OCI-LY7 (cell line): ENCODE measurements at regions of chr2 and their contacts with region 1.

Region 1: GRCh38 chr2:158006961-158007719 is 94.5 kb upstream of the UPP2 start:
- DNase-seq: no peak
- H3K4me3 ChIP-seq: no peak overlapping the region
- H3K27ac ChIP-seq: no peak overlapping the region
- H3K4me1 ChIP-seq: no peaks in the 10 kb centered on the region
- CTCF ChIP-seq: no peak; the same call in 1 of the 2 replicates

Region 2: GRCh38 chr2:157302492-157303099 is 704.5 kb before region 1 on chr2:
- CTCF ChIA-PET with region 1: no interaction called
- POLR2A ChIA-PET with region 1: interaction called, 3 read pairs
- intact Hi-C with region 1: loop called (anchors 5 kb)
- DNase-seq: peak; percentile 67
- H3K4me3 ChIP-seq: no peak overlapping the region
- H3K27ac ChIP-seq: no peak overlapping the region
- H3K4me1 ChIP-seq: no peaks in the 10 kb centered on the region
- CTCF ChIP-seq: peak; percentile 98

Region 3: DNA sequence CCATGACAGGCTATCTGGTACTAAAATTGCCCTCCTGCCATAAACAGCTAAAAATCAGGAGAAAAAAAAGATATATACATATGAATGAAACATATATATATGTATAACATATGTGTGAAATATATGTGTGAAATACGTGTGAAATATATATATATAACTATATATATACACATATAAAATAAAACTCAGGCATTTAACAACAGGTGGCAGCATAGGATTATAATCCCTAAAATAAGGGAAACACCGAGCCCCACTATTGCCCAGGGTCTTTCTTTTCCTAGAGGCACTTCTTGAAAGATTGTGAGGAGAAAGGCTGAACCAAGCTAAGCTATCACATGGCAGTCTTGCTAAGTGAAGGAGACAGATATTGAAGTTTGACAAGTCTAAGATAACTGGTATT is 497.4 kb before region 1 on chr2:
- CTCF ChIA-PET with region 1: no interaction called
- POLR2A ChIA-PET with region 1: no interaction called
- intact Hi-C with region 1: loop called (anchors 2 kb)
- DNase-seq: peak; percentile 11
- H3K4me3 ChIP-seq: no peak overlapping the region
- H3K27ac ChIP-seq: no peak overlapping the region
- H3K4me1 ChIP-seq: no peaks in the 10 kb centered on the region
- CTCF ChIP-seq: no peak; the same call in 1 of the 2 replicates

Region 4: GRCh38 chr2:157777427-157777826 is 229.7 kb before region 1 on chr2:
- CTCF ChIA-PET with region 1: no interaction called
- POLR2A ChIA-PET with region 1: no interaction called
- intact Hi-C with region 1: loop called (anchors 2 kb)
- DNase-seq: peak; percentile 22
- H3K4me3 ChIP-seq: no peak overlapping the region
- H3K27ac ChIP-seq: no peak overlapping the region
- H3K4me1 ChIP-seq: no peaks in the 10 kb centered on the region
- CTCF ChIP-seq: peak; percentile 82